Activated CD4-positive, alpha-beta T cell treated with anti-CD3 and anti-CD28 coated beads, Interleukin-2, amount 10 ng/mL, durations not matched to agents 24 days and 14 days (primary cell): ENCODE measurements at regions of chr7 and their contacts with region 1.

Region 1: DNA sequence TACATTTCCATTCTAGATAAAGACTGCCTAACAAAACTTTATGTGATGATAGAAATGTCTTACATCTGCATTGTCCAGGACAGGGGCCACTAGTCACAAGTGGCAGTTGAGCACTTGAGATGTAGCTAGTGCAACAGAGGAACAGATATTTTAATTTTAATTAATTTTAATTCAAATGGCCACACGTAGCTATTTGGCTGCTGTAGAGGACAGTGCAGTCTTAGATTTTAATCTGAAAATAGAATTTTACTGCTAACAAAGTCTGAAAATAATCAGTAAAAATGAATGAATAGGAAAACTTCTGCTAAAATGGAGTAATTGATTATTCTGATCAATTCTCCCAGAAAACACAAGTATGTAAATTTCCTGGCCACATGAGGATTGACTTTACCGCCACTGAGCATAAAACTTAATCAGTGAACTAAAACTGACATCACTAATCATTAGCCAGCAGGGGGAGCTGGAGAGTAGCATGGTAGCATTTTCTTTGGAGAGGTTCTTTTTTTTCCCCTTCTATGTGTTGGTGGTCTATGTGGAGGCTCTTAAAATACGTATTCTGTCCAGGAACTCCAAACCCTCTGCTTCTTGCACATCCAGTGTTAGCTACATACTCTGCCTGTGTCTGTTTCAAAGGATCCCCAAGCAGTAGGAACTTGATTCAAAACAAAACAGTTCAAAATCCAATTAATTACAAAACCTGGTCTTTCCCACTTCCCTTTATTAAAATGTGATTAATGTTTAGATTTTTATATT is 52.1 kb downstream of the TSPAN12 start:
- DNase-seq: peak; percentile 84
- H3K4me3 Mint-ChIP-seq: no peak overlapping the region
- H3K27ac Mint-ChIP-seq: no peak overlapping the region
- H3K4me1 Mint-ChIP-seq: no peaks in the 10 kb centered on the region
- H3K27me3 Mint-ChIP-seq: peaks cover 2% of the 10 kb centered on the region

Region 2: GRCh38 chr7:120691915-120692314 is 113.9 kb before region 1 on chr7:
- intact Hi-C with region 1: no loop called
- DNase-seq: no peak
- H3K4me3 Mint-ChIP-seq: no peak overlapping the region
- H3K27ac Mint-ChIP-seq: no peak overlapping the region
- H3K4me1 Mint-ChIP-seq: no peaks in the 10 kb centered on the region
- H3K27me3 Mint-ChIP-seq: no peaks in the 10 kb centered on the region

Region 3: DNA sequence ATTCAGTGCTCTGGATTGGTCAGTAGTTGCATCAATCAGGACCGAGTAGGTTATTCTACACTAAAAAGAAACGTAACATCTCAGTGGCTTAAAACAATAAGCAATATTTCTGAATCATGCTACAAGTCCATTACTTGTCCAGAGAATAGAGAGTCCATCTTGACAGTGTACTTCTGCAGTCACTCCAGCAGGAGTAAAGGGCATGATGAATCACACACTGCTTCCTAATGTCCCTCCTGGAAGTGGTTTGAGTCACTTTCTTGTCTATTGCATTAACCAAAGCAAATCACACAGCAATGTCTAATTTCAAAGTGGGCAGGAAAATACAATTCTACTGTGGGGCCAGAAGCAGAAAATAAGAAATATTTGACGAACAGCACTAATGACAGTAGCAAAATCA is 72.7 kb before region 1 on chr7:
- intact Hi-C with region 1: no loop called
- DNase-seq: no peak
- H3K4me3 Mint-ChIP-seq: no peak overlapping the region
- H3K27ac Mint-ChIP-seq: no peak overlapping the region
- H3K4me1 Mint-ChIP-seq: no peaks in the 10 kb centered on the region
- H3K27me3 Mint-ChIP-seq: no peaks in the 10 kb centered on the region

Region 4: GRCh38 chr7:120819863-120820262 is 14.1 kb after region 1 on chr7:
- intact Hi-C with region 1: no loop called
- DNase-seq: no peak
- H3K4me3 Mint-ChIP-seq: no peak overlapping the region
- H3K27ac Mint-ChIP-seq: no peak overlapping the region
- H3K4me1 Mint-ChIP-seq: no peaks in the 10 kb centered on the region
- H3K27me3 Mint-ChIP-seq: peaks cover 12% of the 10 kb centered on the region

Region 5: GRCh38 chr7:120857588-120858573 is 52.1 kb after region 1 on chr7 and contains the start of gene TSPAN12:
- intact Hi-C with region 1: loop called (anchors 5 kb)
- DNase-seq: peak; percentile 84
- H3K4me3 Mint-ChIP-seq: peak within 1 kb of the TSS; percentile 85
- H3K27ac Mint-ChIP-seq: no peak within 1 kb of the TSS
- H3K4me1 Mint-ChIP-seq: peaks cover 13% of the 10 kb centered on the region
- H3K27me3 Mint-ChIP-seq: peaks cover 63% of the 10 kb centered on the region
- total RNA-seq, gene TSPAN12: not detected in 2 replicates

Region 6: DNA sequence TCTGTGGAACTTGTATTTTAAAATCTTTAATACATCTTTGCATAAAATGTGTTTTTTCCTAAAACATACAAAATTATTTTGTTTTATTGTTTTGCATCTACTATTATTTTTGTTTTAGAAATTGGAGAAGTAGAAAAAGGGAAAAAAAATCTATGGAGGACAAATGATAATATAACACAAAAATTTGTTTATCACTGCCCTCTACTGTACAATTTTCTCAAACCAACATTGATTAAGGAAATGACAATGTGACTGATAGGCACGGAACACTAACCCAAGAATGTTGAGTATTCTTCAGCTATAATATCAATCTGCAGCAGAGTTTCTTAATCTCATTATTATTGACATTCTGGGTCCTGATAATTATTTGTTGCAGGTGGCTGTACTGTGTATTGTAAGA is 135.3 kb after region 1 on chr7:
- intact Hi-C with region 1: loop called (anchors 1 kb)
- DNase-seq: no peak
- H3K4me3 Mint-ChIP-seq: no peak overlapping the region
- H3K27ac Mint-ChIP-seq: no peak overlapping the region
- H3K4me1 Mint-ChIP-seq: no peaks in the 10 kb centered on the region
- H3K27me3 Mint-ChIP-seq: peaks cover 23% of the 10 kb centered on the region

Region 7: DNA sequence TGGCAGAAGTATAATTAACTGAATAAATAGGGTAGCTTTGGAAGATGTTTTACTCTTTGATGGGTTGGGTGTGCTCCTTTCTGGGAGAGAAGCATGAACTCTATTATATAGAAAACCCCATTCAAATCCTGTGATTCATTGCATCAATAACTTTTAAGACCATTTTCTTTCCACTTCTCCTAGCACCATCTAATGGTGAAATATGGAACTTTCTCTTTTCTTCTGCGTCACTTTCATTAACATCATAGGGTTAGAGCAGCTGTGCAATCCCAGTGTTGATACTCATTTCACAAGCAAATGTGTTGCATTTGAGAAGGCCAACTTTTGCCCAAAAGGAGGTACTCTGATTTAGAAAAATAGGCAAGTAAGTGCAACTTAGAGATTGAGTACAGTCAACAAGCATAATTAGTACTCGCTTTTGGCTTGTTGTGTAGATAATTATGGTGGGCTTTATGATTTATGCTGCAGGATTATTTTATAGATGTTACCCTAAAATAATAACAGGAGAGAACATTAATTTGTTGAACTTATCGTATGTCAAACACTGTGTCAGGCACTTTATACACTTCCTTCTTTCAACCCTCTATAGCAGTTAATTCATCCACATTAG is 275.6 kb after region 1 on chr7:
- intact Hi-C with region 1: loop called (anchors 1 kb)
- DNase-seq: peak; percentile 63
- H3K4me3 Mint-ChIP-seq: no peak overlapping the region
- H3K27ac Mint-ChIP-seq: no peak overlapping the region
- H3K4me1 Mint-ChIP-seq: no peaks in the 10 kb centered on the region
- H3K27me3 Mint-ChIP-seq: peaks cover 22% of the 10 kb centered on the region

Region 8: DNA sequence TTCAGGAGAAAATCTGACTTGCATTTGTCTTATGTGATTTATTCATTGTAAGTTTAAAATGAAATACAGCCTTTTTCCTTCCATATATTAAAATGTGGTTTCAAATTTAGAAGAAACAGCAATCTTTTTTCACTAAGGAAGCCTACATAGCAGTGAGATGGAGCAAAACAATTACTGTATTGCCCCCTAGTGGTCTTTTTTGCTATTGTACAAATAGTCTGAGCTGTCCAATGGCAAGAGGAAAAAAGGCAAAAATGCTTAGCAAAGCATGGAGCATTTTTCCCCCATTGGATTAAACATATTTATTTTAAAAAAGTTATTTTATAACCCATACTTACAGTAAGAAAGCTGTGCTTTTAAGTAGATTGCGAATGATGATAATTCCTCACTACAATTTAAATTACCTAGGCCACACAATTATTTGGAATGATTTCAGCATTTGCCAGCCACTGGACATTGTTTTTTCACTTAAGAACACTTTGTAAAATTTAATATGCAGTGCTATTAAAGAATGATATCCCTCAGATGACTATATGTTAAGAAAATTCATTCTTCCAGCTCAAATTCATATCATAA is 302.2 kb after region 1 on chr7:
- intact Hi-C with region 1: loop called (anchors 5 kb)
- DNase-seq: peak; percentile 64
- H3K4me3 Mint-ChIP-seq: no peak overlapping the region
- H3K27ac Mint-ChIP-seq: no peak overlapping the region
- H3K4me1 Mint-ChIP-seq: no peaks in the 10 kb centered on the region
- H3K27me3 Mint-ChIP-seq: peaks cover 28% of the 10 kb centered on the region

Region 9: GRCh38 chr7:121195874-121196755 is 390.3 kb after region 1 on chr7:
- intact Hi-C with region 1: no loop called
- DNase-seq: no peak
- H3K4me3 Mint-ChIP-seq: no peak overlapping the region
- H3K27ac Mint-ChIP-seq: no peak overlapping the region
- H3K4me1 Mint-ChIP-seq: no peaks in the 10 kb centered on the region
- H3K27me3 Mint-ChIP-seq: peaks cover 1% of the 10 kb centered on the region